CD4-positive, alpha-beta memory T cell (primary cell): ENCODE measurements at regions of chr6 and their contacts with region 1.

Region 1: GRCh38 chr6:90478789-90479602 is 107.9 kb downstream of the MAP3K7 start:
- DNase-seq: peak; percentile 78 to 92 (median 82)
- H3K4me3 ChIP-seq: no peak overlapping the region
- H3K4me3 Mint-ChIP-seq: peak overlapping the region in 5 of 8 donors; percentile 29 to 78 (median 69)
- H3K27ac ChIP-seq: no peak overlapping the region
- H3K27ac Mint-ChIP-seq: peak overlapping the region; percentile 54 to 91 (median 88)
- H3K4me1 ChIP-seq: peaks cover 23% of the 10 kb centered on the region
- H3K4me1 Mint-ChIP-seq: peaks cover 12 to 41% (median 22%) of the 10 kb centered on the region in 4 donors
- H3K27me3 ChIP-seq: no peaks in the 10 kb centered on the region
- H3K27me3 Mint-ChIP-seq: no peaks in the 10 kb centered on the region

Region 2: DNA sequence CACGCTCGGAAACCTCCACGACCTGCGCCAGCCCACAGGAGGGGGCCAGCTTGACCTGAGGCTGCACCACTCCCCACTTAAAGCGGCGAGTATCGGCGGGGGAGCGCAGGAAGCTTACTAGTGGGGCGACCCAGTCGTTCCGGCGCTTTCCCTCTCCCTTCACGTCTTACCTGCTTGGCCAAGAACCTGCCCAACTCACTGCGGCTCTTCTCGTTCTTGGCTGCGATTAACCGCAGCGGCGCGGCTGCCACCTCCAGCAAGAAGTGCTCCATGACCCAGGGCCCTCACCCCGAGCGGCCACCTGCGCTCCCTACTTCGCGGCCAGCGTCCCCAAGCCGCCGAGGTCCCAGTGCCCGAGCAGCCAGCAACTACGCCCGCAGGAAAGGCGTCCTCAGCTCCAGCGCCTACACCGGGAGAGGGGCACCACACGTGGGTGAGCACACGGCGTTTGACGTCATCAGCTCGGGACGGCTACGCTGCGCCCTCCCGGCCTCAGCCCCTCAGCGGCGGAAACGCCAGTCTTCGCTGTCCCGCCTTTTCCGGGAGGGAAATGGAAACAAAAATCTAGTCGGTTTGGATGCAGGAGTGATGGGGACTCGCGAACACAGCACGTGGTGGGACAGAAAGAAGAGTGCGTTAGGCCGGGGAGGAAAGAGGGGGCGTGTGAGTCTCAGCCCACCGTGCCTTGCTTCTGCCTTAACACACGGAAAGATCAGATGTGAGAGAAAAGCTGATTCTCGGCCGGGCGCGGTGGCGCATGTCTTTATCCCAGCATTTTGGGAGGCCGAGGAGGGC is 659.5 kb before region 1 on chr6 and contains the start of gene MDN1:
- CTCF ChIA-PET with region 1: no interaction called
- POLR2A ChIA-PET with region 1: no interaction called
- intact Hi-C with region 1: loop called (anchors 10 kb)
- DNase-seq: peak; percentile 87 to 91 (median 89)
- H3K4me3 ChIP-seq: peak within 1 kb of the TSS; percentile 97
- H3K4me3 Mint-ChIP-seq: peak within 1 kb of the TSS; percentile 92 to 100 (median 96)
- H3K27ac ChIP-seq: peak within 1 kb of the TSS; percentile 62
- H3K27ac Mint-ChIP-seq: peak within 1 kb of the TSS; percentile 91 to 100 (median 96)
- H3K4me1 ChIP-seq: peaks cover 34% of the 10 kb centered on the region
- H3K4me1 Mint-ChIP-seq: peaks cover 21 to 44% (median 31%) of the 10 kb centered on the region in 4 donors
- H3K27me3 ChIP-seq: no peaks in the 10 kb centered on the region
- H3K27me3 Mint-ChIP-seq: no peaks in the 10 kb centered on the region
- total RNA-seq, gene MDN1: 62.0 to 72.2 TPM

Region 3: GRCh38 chr6:89970609-89971337 is 508.2 kb before region 1 on chr6:
- CTCF ChIA-PET with region 1: interaction called, 11 read pairs
- POLR2A ChIA-PET with region 1: no interaction called
- intact Hi-C with region 1: loop called (anchors 1 kb)
- DNase-seq: peak in 4 of 5 donors; percentile 23 to 40 (median 33)
- H3K4me3 ChIP-seq: no peak overlapping the region
- H3K4me3 Mint-ChIP-seq: no peak overlapping the region
- H3K27ac ChIP-seq: no peak overlapping the region
- H3K27ac Mint-ChIP-seq: no peak overlapping the region
- H3K4me1 ChIP-seq: no peaks in the 10 kb centered on the region
- H3K4me1 Mint-ChIP-seq: peaks cover 2 to 20% (median 8%) of the 10 kb centered on the region in 4 donors
- H3K27me3 ChIP-seq: no peaks in the 10 kb centered on the region
- H3K27me3 Mint-ChIP-seq: no peaks in the 10 kb centered on the region

Region 4: DNA sequence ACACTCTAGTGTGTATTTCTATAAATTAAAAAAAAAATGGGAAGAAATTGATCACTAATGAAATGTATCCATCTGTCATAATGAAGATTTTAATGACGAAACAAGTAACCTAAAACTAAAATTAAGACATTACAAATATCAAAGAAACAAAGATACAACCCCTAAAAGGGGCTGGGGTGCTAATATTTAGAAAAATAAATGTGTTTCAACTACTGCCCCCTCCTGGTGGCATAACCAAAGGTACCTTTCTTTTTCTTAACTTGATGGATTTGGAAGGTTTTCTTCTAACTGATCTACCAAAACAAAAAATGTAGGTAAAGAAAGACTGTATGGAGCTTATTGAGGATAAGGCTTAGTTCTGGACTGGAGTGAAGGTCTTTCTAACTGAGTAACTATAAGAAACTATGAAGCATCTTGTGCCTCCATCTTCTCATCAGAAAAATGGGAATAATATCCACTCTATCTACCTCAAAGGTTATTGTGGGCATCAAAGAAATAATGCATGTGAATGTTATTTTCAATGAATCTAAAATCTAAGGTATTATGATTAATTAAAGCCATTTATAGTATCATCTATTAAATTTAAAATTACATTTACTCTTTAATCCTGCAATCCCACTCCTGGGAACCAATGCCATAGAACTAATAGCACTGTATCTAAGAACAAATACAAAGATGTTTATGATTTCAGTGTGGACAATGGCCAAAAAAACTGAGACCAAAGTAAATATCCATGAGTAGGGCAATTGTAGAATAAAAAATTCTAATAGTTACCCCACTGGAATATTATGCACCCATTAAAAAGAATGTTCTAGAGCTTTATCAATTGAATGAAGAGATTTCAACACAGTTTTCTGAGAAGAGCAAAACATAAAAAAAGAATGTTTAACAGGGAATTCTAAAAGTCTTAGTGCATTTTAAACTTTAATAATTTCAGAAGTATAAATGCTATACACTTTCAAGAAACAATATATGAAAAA is 299.5 kb before region 1 on chr6:
- CTCF ChIA-PET with region 1: interaction called, 7 read pairs
- POLR2A ChIA-PET with region 1: no interaction called
- intact Hi-C with region 1: loop called (anchors 1 kb)
- DNase-seq: peak in 4 of 5 donors; percentile 27 to 36 (median 33)
- H3K4me3 ChIP-seq: no peak overlapping the region
- H3K4me3 Mint-ChIP-seq: no peak overlapping the region
- H3K27ac ChIP-seq: no peak overlapping the region
- H3K27ac Mint-ChIP-seq: peak overlapping the region in 3 of 7 donors; percentile 35 to 72 (median 62)
- H3K4me1 ChIP-seq: peaks cover 46% of the 10 kb centered on the region
- H3K4me1 Mint-ChIP-seq: peaks cover 28 to 75% (median 51%) of the 10 kb centered on the region in 4 donors
- H3K27me3 ChIP-seq: no peaks in the 10 kb centered on the region
- H3K27me3 Mint-ChIP-seq: no peaks in the 10 kb centered on the region

Region 5: GRCh38 chr6:90285611-90286381 is 193.2 kb before region 1 on chr6:
- CTCF ChIA-PET with region 1: interaction called, 76 read pairs
- POLR2A ChIA-PET with region 1: interaction called, 4 read pairs
- intact Hi-C with region 1: loop called (anchors 1 kb)
- DNase-seq: peak; percentile 68 to 83 (median 76)
- H3K4me3 ChIP-seq: peak overlapping the region; percentile 1 to 58
- H3K4me3 Mint-ChIP-seq: peak overlapping the region; percentile 80 to 95 (median 86)
- H3K27ac ChIP-seq: peak overlapping the region; percentile 46
- H3K27ac Mint-ChIP-seq: peak overlapping the region; percentile 77 to 98 (median 89)
- H3K4me1 ChIP-seq: peaks cover 32% of the 10 kb centered on the region
- H3K4me1 Mint-ChIP-seq: peaks cover 47 to 89% (median 68%) of the 10 kb centered on the region in 4 donors
- H3K27me3 ChIP-seq: no peaks in the 10 kb centered on the region
- H3K27me3 Mint-ChIP-seq: peaks cover 0 to 2% of the 10 kb centered on the region in 2 donors

Region 6: GRCh38 chr6:90403489-90404381 is 75.3 kb before region 1 on chr6:
- CTCF ChIA-PET with region 1: interaction called, 129 read pairs
- POLR2A ChIA-PET with region 1: interaction called, 13 read pairs
- intact Hi-C with region 1: no loop called
- DNase-seq: peak in 1 of 5 donors; percentile 9
- H3K4me3 ChIP-seq: no peak overlapping the region
- H3K4me3 Mint-ChIP-seq: peak overlapping the region in 6 of 8 donors; percentile 21 to 76 (median 60)
- H3K27ac ChIP-seq: no peak overlapping the region
- H3K27ac Mint-ChIP-seq: peak overlapping the region; percentile 80 to 94 (median 90)
- H3K4me1 ChIP-seq: peaks cover 63% of the 10 kb centered on the region
- H3K4me1 Mint-ChIP-seq: peaks cover 38 to 66% (median 50%) of the 10 kb centered on the region in 4 donors
- H3K27me3 ChIP-seq: no peaks in the 10 kb centered on the region
- H3K27me3 Mint-ChIP-seq: no peaks in the 10 kb centered on the region

Region 7: DNA sequence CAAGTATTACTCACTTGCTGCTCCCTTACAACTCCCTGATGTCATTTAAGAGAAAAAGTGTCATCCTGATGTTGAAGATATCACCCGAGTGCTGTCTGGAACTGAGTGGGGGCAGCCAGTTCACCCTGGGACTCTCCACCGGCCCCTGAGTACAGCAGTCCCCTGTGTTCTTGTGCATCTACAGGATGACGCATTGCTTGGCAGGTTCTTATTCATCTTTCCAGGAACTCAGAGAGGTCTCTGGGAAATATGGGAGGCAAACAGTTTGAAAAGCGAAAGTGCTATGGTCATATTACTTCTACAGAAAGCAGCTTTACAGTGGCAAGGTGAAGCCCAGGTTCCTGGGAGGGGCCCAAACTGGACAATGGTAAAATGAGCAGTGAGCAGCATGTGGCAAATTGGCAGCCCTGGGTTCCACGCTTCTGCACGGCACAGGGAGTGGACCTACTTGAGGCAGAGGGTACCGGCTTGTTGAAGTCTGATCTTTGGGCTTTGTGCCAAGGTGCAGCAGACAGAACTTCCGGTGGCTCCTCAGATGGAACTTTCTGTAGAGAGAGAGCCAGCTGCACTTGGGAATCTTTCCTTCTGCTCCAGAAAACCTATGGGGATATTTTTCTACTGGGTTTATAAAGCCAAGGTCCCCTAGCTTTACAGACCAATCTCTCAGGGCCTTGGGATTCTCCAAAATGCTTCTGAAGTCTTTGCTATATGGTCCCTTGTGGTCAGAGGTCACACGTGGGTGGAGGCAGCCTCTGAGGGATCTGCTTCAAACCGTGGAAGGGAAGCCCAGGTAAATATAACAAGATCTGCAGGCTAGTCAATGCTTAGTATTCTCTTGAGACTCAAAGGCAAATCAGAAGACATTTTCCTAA is 20.4 kb before region 1 on chr6:
- CTCF ChIA-PET with region 1: interaction called, 37 read pairs
- POLR2A ChIA-PET with region 1: interaction called, 17 read pairs
- intact Hi-C with region 1: no loop called
- DNase-seq: peak; percentile 36 to 91 (median 49)
- H3K4me3 ChIP-seq: peak overlapping the region; percentile 13 to 17
- H3K4me3 Mint-ChIP-seq: peak overlapping the region; percentile 25 to 86 (median 80)
- H3K27ac ChIP-seq: peak overlapping the region; percentile 19
- H3K27ac Mint-ChIP-seq: peak overlapping the region; percentile 76 to 92 (median 90)
- H3K4me1 ChIP-seq: peaks cover 59% of the 10 kb centered on the region
- H3K4me1 Mint-ChIP-seq: peaks cover 29 to 74% (median 51%) of the 10 kb centered on the region in 4 donors
- H3K27me3 ChIP-seq: no peaks in the 10 kb centered on the region
- H3K27me3 Mint-ChIP-seq: no peaks in the 10 kb centered on the region

Region 8: GRCh38 chr6:90502866-90503407 is 23.9 kb after region 1 on chr6:
- CTCF ChIA-PET with region 1: no interaction called
- POLR2A ChIA-PET with region 1: no interaction called
- intact Hi-C with region 1: no loop called
- DNase-seq: peak in 1 of 5 donors; percentile 1
- H3K4me3 ChIP-seq: no peak overlapping the region
- H3K4me3 Mint-ChIP-seq: no peak overlapping the region
- H3K27ac ChIP-seq: no peak overlapping the region
- H3K27ac Mint-ChIP-seq: peak overlapping the region in 3 of 7 donors; percentile 10 to 47 (median 23)
- H3K4me1 ChIP-seq: no peaks in the 10 kb centered on the region
- H3K4me1 Mint-ChIP-seq: peaks cover 0 to 9% (median 6%) of the 10 kb centered on the region in 4 donors
- H3K27me3 ChIP-seq: no peaks in the 10 kb centered on the region
- H3K27me3 Mint-ChIP-seq: no peaks in the 10 kb centered on the region